ENCODE measurements at regions of chr11 and their contacts with region 1.

Region 1: GRCh38 chr11:57456960-57457642 is 3.2 kb upstream of the RTN4RL2 start:
- DNase-seq: peak; percentile 74 to 90
- H3K4me3 ChIP-seq: no peak overlapping the region
- H3K27ac ChIP-seq: no peak overlapping the region
- H3K4me1 ChIP-seq: peaks cover 22% of the 10 kb centered on the region
- H3K27me3 ChIP-seq: peaks cover 22% of the 10 kb centered on the region
- CTCF ChIP-seq: peak; percentile 100

Region 2: GRCh38 chr11:57356268-57356667 is 100.8 kb before region 1 on chr11:
- CTCF ChIA-PET with region 1: interaction called, 12 read pairs
- POLR2A ChIA-PET with region 1: no interaction called
- intact Hi-C with region 1: no loop called
- DNase-seq: no peak
- H3K4me3 ChIP-seq: no peak overlapping the region
- H3K27ac ChIP-seq: no peak overlapping the region
- H3K4me1 ChIP-seq: peaks cover 13% of the 10 kb centered on the region; the same call in 1 of the 2 replicates
- H3K27me3 ChIP-seq: peaks cover 20% of the 10 kb centered on the region
- CTCF ChIP-seq: no peak

Region 3: GRCh38 chr11:57480409-57481137 is 23.5 kb after region 1 on chr11:
- CTCF ChIA-PET with region 1: interaction called, 14 read pairs
- POLR2A ChIA-PET with region 1: interaction called, 3 read pairs
- intact Hi-C with region 1: loop called (anchors 1 kb)
- DNase-seq: peak; percentile 62 to 69
- H3K4me3 ChIP-seq: no peak overlapping the region
- H3K27ac ChIP-seq: no peak overlapping the region
- H3K4me1 ChIP-seq: peaks cover 6% of the 10 kb centered on the region; the same call in 1 of the 2 replicates
- H3K27me3 ChIP-seq: peaks cover 28% of the 10 kb centered on the region
- CTCF ChIP-seq: peak; percentile 90

Region 4: DNA sequence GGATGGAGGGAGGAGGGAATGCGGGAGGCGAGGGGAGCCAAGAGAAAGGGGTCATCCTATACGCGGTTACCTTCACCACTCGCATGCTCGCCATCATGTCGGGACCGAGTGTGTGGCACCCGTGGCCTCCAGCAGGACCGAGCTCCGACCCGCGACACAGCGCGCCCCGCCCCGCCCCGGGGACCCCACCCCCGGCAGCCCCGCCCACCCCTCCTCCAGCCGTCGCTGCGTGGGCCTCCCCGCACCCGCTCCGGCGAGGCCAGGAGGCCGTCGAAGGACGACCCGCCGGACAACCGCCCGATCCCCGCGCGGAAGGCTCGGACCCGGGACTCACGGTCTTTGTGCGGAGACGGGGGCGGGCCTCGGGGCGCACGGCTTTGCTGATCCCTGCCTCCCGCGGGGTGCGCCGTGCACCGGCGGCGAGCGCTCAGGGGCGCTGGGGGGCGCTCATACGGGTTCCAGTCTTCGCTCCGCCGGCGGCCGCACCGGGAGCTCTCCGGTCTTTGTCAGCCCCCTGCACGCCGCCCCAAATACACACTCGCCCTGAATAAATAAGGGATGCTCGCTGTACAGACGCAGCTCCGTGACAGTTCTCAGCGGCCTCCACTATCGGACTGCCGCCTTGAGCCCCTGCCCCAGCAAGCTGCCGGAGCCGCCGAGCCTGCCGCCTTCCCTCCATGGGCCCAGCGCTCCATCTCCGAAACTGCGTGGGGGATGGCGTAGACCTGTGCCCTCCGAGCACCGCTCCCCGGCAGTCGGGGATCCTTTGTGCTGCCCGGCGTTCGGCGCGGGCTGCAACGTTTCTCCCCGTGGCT is 110.6 kb after region 1 on chr11 and contains the start of gene UBE2L6:
- CTCF ChIA-PET with region 1: no interaction called
- POLR2A ChIA-PET with region 1: no interaction called
- intact Hi-C with region 1: loop called (anchors 1 kb)
- DNase-seq: peak in 1 of 2 experiments; percentile 62
- H3K4me3 ChIP-seq: peak within 1 kb of the TSS; percentile 89
- H3K27ac ChIP-seq: no peak within 1 kb of the TSS
- H3K4me1 ChIP-seq: peaks cover 24% of the 10 kb centered on the region
- H3K27me3 ChIP-seq: no peaks in the 10 kb centered on the region
- CTCF ChIP-seq: no peak
- total RNA-seq, gene UBE2L6: 121 and 122 TPM in 2 replicates

Region 5: GRCh38 chr11:57800444-57801182 is 343.5 kb after region 1 on chr11:
- CTCF ChIA-PET with region 1: no interaction called
- POLR2A ChIA-PET with region 1: no interaction called
- intact Hi-C with region 1: no loop called
- DNase-seq: peak; percentile 71 to 100
- H3K4me3 ChIP-seq: peak overlapping the region; percentile 3; the same call in 1 of the 2 replicates
- H3K27ac ChIP-seq: peak overlapping the region; percentile 94
- H3K4me1 ChIP-seq: peaks cover 35% of the 10 kb centered on the region
- H3K27me3 ChIP-seq: no peaks in the 10 kb centered on the region
- CTCF ChIP-seq: peak; percentile 98

Region 6: GRCh38 chr11:58513747-58514367 is 1056.8 kb after region 1 on chr11:
- CTCF ChIA-PET with region 1: no interaction called
- POLR2A ChIA-PET with region 1: no interaction called
- intact Hi-C with region 1: loop called (anchors 5 kb)
- DNase-seq: peak; percentile 65 to 67
- H3K4me3 ChIP-seq: no peak overlapping the region
- H3K27ac ChIP-seq: no peak overlapping the region
- H3K4me1 ChIP-seq: no peaks in the 10 kb centered on the region
- H3K27me3 ChIP-seq: 0 out of 2 replicates have a peak, but pooled peaks cover 3% of the 10 kb centered on the region
- CTCF ChIP-seq: peak; percentile 87

Region 7: GRCh38 chr11:58586998-58587397 is 1129.9 kb after region 1 on chr11:
- CTCF ChIA-PET with region 1: no interaction called
- POLR2A ChIA-PET with region 1: no interaction called
- intact Hi-C with region 1: no loop called
- DNase-seq: no peak
- H3K4me3 ChIP-seq: no peak overlapping the region
- H3K27ac ChIP-seq: no peak overlapping the region
- H3K4me1 ChIP-seq: peaks cover 18% of the 10 kb centered on the region; the same call in 1 of the 2 replicates
- H3K27me3 ChIP-seq: no peaks in the 10 kb centered on the region
- CTCF ChIP-seq: no peak

Measured in PC-9 (cell line).